ENCODE measurements at regions of chr17 and their contacts with region 1.

Region 1: GRCh38 chr17:66715745-66716156 is 119.2 kb upstream of the CACNG5 start:
- DNase-seq: peak; percentile 92
- ATAC-seq: peak; percentile 52
- H3K4me3 ChIP-seq: no peak overlapping the region
- H3K27ac ChIP-seq: no peak overlapping the region
- H3K4me1 ChIP-seq: peaks cover 34% of the 10 kb centered on the region
- H3K27me3 ChIP-seq: no peaks in the 10 kb centered on the region
- CTCF ChIP-seq: peak; percentile 95

Region 2: GRCh38 chr17:66673668-66674315 is 42.0 kb before region 1 on chr17:
- CTCF ChIA-PET with region 1: interaction called, 3 read pairs
- POLR2A ChIA-PET with region 1: no interaction called
- intact Hi-C with region 1: loop called (anchors 1 kb)
- DNase-seq: peak; percentile 92
- ATAC-seq: peak; percentile 32
- H3K4me3 ChIP-seq: no peak overlapping the region
- H3K27ac ChIP-seq: no peak overlapping the region
- H3K4me1 ChIP-seq: peaks cover 42% of the 10 kb centered on the region
- H3K27me3 ChIP-seq: no peaks in the 10 kb centered on the region
- CTCF ChIP-seq: peak; percentile 97

Region 3: DNA sequence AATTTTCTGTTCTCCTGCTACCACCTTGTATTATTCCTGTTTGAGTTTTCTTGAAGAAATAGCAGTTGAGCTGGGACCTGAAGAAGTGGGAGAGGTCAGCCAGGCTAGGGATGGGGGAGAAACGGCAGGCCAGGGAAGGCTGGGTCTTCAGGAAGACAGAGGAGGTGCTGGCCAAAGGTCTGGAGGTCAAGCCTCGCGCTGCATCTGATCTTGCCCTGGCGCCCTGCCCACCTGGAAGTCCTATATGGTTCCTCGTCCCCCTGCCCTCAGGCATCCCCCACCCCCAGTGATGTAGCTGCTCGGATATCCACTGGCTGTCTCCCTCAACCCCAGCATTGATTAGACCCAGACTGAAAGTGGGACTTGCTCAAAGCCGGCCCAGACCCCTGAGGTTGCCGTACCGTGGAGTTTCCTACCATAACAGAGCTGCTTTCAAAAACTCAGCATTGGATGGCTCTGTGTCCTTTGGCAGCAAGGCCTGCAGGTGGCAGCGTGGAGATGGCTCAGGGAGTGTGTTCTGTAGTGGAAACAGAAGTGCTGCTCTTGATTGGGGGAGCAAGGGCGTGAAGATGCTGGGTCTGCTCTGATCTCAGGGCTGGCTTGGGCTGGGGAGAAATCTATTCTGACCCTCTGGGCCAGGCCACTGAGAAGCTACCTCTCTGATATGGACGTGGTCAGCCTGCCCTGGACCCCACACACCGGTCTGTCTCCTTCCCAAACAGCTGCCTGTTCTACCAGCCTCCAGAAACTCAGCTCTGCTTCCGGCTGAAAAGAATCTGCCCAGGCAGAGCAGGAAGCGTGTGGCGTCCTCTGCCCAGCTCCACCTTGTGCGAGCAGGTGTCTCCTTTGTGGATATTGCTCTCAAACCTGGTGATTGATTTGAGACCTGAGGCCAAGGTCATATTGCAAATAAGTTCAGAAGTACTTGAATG is 12.2 kb after region 1 on chr17:
- CTCF ChIA-PET with region 1: interaction called, 6 read pairs
- POLR2A ChIA-PET with region 1: no interaction called
- intact Hi-C with region 1: loop called (anchors 1 kb)
- DNase-seq: peak; percentile 69
- ATAC-seq: peak; percentile 77
- H3K4me3 ChIP-seq: no peak overlapping the region
- H3K27ac ChIP-seq: no peak overlapping the region
- H3K4me1 ChIP-seq: peaks cover 9% of the 10 kb centered on the region
- H3K27me3 ChIP-seq: no peaks in the 10 kb centered on the region
- CTCF ChIP-seq: peak; percentile 90

Region 4: GRCh38 chr17:66900126-66901010 is 184.6 kb after region 1 on chr17:
- CTCF ChIA-PET with region 1: interaction called, 4 read pairs
- POLR2A ChIA-PET with region 1: no interaction called
- intact Hi-C with region 1: loop called (anchors 1 kb)
- DNase-seq: peak; percentile 72
- ATAC-seq: peak; percentile 77
- H3K4me3 ChIP-seq: no peak overlapping the region
- H3K27ac ChIP-seq: no peak overlapping the region
- H3K4me1 ChIP-seq: peaks cover 9% of the 10 kb centered on the region
- H3K27me3 ChIP-seq: no peaks in the 10 kb centered on the region; the same call in 1 of the 2 replicates
- CTCF ChIP-seq: peak; percentile 84

Region 5: GRCh38 chr17:66906321-66907278 is 190.8 kb after region 1 on chr17:
- CTCF ChIA-PET with region 1: no interaction called
- POLR2A ChIA-PET with region 1: no interaction called
- intact Hi-C with region 1: loop called (anchors 1 kb)
- DNase-seq: peak; percentile 90
- ATAC-seq: peak; percentile 23
- H3K4me3 ChIP-seq: no peak overlapping the region
- H3K27ac ChIP-seq: no peak overlapping the region
- H3K4me1 ChIP-seq: peaks cover 14% of the 10 kb centered on the region
- H3K27me3 ChIP-seq: no peaks in the 10 kb centered on the region
- CTCF ChIP-seq: peak; percentile 96

Region 6: DNA sequence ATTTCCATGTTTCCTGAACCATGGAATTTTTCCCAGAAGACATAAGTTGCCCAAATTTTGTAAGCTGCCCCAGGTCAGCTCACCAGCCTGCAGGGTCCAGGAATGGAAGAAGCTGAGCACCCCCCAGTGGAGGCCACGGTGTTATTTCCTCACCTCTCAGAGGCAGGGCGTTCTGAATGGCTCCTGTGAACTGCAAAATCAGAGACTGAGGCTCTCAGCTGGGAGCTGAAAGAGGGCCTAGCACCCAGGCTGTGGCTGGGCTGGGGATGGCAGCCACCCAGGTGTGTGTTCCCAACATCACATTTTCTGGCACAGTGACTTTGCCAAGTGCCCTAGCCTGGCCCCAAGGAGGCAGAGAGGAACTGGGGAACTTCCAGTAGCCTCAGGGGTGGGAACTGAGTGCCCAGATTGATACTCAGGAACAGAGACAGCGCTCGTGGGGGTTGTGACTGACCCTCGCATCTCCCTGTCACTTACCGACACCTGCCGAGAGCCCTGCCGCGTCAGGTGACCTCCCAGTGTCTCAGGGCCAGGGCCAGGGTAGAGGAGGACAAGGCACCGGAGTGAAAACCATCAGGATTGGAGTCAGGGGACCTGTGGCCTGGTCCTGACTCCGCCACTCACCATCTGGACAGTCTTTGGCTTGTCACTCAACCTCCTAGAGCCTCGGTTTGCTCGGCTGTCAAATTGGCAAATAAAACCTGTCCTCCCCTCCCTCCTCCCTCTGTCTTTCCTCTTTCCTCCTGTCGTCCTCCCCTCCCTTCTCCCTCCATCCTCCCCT is 260.0 kb after region 1 on chr17:
- CTCF ChIA-PET with region 1: interaction called, 10 read pairs
- POLR2A ChIA-PET with region 1: no interaction called
- intact Hi-C with region 1: no loop called
- DNase-seq: peak; percentile 76
- ATAC-seq: peak; percentile 80
- H3K4me3 ChIP-seq: no peak overlapping the region
- H3K27ac ChIP-seq: no peak overlapping the region
- H3K4me1 ChIP-seq: peaks cover 10% of the 10 kb centered on the region
- H3K27me3 ChIP-seq: no peaks in the 10 kb centered on the region
- CTCF ChIP-seq: peak; percentile 84

Region 7: DNA sequence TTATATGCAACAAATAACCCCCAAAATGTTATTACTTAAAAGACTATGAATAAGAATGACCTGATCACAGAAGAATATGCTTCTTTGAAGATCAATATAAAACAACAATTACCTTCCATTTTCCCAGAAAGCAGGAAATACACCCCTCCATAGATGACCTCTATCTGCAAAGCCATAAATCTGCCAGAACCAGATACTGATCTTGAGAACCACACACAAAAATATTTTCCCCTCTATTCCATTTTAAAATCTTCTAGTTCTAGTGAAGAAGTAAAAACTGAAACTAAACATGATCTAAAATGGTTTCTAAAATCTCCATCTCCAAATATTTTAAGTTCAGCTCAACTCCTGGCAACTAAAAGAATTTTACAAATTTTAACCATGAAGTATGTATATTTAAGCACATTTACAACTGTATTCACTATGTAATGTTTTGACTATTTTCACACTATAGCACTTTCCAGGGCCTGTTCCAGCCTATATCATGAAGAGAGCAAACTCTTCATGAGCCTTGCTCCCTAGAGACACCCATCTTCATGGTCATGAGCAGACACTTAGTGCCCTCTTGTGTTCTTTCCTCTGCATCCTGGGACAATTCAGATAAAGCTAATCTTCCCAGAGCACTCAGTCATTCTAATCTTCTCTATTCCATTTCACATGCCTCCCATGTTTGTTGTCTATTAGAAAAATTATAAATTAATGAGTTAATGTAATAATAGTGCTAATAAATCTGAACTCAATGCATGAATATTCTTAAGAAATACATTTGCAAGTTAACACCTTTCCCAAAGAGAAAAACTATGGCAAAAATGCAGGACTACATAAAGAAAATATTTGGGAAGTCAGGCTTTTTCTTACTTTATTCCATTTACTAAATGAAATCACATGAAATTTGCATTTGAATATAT is 442.2 kb after region 1 on chr17:
- CTCF ChIA-PET with region 1: interaction called, 3 read pairs
- POLR2A ChIA-PET with region 1: no interaction called
- intact Hi-C with region 1: loop called (anchors 5 kb)
- DNase-seq: peak; percentile 60
- ATAC-seq: peak; percentile 68
- H3K4me3 ChIP-seq: no peak overlapping the region
- H3K27ac ChIP-seq: no peak overlapping the region
- H3K4me1 ChIP-seq: peaks cover 15% of the 10 kb centered on the region; the same call in 1 of the 2 replicates
- H3K27me3 ChIP-seq: no peaks in the 10 kb centered on the region
- CTCF ChIP-seq: peak; percentile 74

Measured in PC-3 (cell line).